Gastrocnemius medialis (tissue), 4 donors: ENCODE measurements at regions of chr11 and their contacts with region 1.

Region 1: DNA sequence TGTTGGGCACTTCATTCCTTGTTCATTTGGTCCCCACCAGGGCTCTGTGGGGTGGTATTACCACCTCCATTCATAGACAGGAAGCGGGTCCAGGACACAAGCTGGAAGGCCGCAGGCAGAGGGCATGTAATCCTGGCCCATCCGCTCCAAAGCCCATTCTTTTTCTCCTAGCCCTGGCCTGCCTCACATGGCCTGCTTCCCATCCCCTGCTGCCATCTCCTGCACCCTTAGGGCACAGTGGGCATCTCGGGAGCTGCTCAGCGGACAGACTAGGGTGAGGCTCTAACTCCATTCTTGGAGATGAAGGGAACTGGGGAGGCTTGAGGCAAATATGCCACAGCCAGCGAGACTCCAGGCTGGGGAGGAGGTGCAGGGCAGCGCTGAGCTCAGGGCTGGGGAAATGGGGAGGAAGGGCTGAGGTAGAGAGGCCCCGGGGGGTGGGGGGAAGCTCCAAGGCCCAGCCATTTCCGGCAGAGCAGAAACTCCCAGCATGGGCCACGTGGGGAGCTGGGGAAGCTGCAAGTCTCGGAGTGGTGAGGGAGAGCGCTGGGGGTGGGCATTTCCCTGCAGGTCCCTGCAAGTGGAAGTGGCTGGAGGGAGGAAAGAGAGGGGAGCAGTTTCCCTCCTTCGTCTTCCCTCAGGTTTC is 14.3 kb upstream of the BCL9L start:
- DNase-seq: no peak
- ATAC-seq: no peak
- H3K4me3 ChIP-seq: no peak overlapping the region
- H3K27ac ChIP-seq: no peak overlapping the region
- H3K4me1 ChIP-seq: no peaks in the 10 kb centered on the region
- H3K27me3 ChIP-seq: no peaks in the 10 kb centered on the region
- CTCF ChIP-seq: no peak
- POLR2A ChIP-seq: no peak

Region 2: DNA sequence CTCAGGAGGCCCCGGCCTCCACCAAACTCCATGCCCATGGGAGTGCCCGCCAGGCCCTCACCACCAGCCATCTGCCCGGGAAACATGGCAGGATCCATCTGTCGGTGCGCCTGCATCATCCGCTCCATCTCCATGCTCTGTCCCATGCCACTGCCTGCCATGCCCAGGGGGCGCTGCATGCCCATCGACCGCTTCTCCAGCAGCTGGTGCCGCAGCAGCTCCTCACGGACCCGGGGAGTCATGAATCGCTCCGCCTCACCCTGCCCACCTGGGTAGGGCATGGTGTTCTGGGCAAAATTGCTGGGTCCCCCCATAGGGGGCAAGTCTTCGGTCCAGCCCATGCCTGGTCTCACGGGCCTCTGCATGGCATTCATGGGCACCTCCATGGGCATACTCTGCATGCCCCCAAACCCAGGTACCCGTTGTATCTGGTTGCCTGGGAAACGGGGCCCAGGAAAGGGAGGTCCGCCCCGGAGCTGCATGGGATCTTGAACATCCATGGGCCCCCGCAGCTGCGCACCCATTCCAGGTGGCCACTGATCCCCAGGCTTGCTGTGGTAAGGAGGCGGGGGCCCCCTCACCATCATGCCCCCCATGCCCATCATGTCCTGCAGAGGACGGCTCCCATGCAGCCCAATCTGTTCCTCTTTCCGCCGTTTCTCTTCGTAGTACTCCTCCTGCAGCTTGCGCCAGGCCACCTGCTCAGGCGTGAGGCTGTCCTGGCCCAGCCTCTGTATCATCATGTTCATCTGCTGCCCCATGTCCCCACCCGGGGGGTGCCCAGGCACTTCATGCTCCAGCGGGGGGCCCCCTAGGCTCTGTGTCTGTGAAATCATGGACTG is 38.4 kb before region 1 on chr11:
- in situ Hi-C with region 1: no loop called
- intact Hi-C with region 1: loop called (anchors 5 kb)
- DNase-seq: peak in 1 of 2 donors; percentile 21
- ATAC-seq: no peak
- H3K4me3 ChIP-seq: no peak overlapping the region
- H3K27ac ChIP-seq: no peak overlapping the region
- H3K4me1 ChIP-seq: peaks cover under 1 to 6% of the 10 kb centered on the region in 2 donors
- H3K27me3 ChIP-seq: no peaks in the 10 kb centered on the region
- CTCF ChIP-seq: peak in 2 of 5 experiments; percentile 10 to 27
- POLR2A ChIP-seq: no peak

Region 3: DNA sequence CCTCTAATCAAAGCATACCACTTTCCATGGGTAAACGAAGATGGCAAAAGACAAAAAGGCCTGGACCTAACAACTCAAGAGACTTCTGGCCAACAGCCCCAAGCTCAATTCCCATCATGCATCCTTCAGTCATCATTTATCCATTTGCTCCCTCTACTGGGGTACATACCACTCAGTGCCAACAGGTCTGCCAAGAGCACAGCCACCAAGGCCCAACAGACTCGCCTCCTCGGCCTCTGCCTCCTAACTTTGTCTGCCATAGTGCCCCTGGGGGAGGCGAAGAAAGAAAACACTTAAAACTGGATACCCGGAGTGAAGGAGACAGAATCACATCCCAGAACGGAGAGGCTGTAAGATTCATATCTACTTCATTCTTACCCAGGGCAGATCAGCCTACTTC is 115.8 kb after region 1 on chr11:
- in situ Hi-C with region 1: no loop called
- intact Hi-C with region 1: no loop called
- DNase-seq: no peak
- ATAC-seq: no peak
- H3K4me3 ChIP-seq: peak overlapping the region; percentile 73 to 84 (median 78)
- H3K27ac ChIP-seq: peak overlapping the region; percentile 83 to 91 (median 88)
- H3K4me1 ChIP-seq: peaks cover 13 to 15% of the 10 kb centered on the region in 2 donors
- H3K27me3 ChIP-seq: no peaks in the 10 kb centered on the region
- CTCF ChIP-seq: no peak
- POLR2A ChIP-seq: no peak

Region 4: DNA sequence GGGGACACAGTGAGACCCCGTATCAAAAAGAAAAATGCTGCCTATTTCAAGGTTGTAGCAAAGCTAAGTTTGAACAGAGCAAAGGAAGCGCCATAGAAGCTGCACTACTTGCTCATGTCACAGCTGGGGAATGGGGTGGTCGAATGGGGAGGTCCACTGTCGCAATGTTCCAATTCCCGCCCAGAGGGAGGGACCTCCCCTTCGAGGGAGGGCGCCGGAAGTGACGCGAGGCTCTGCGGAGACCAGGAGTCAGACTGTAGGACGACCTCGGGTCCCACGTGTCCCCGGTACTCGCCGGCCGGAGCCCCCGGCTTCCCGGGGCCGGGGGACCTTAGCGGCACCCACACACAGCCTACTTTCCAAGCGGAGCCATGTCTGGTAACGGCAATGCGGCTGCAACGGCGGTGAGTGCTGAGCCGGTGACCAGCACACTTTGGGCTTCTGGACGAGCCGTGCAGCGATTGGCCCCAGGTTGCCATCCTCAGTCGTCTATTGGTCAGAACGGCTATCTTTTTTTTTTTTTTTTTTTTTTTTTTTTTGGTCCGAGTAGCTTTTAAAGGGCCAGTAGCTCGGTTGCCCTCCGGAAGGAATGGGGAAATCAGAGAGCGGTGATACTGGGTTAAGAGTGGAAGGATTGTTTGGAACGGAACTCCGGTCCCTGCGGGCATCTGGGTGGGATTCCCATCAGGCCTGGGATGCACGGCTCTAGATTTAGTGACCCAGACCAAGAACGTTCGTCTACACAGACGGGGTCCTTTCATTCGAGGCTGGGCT is 144.8 kb after region 1 on chr11 and contains the start of gene HMBS:
- in situ Hi-C with region 1: no loop called
- intact Hi-C with region 1: no loop called
- DNase-seq: peak; percentile 87 to 92
- ATAC-seq: peak; percentile 98
- H3K4me3 ChIP-seq: peak within 1 kb of the TSS; percentile 77 to 99 (median 80)
- H3K27ac ChIP-seq: peak within 1 kb of the TSS; percentile 88 to 98 (median 94)
- H3K4me1 ChIP-seq: peaks cover 15 to 17% of the 10 kb centered on the region in 2 donors
- H3K27me3 ChIP-seq: no peaks in the 10 kb centered on the region
- CTCF ChIP-seq: no peak
- POLR2A ChIP-seq: peak; percentile 20 to 49
- total RNA-seq, gene HMBS: 8.7 to 31.1 (median 14.5) TPM